Calu3 (cell line): ENCODE measurements at regions of chr20 and their contacts with region 1.

Region 1: DNA sequence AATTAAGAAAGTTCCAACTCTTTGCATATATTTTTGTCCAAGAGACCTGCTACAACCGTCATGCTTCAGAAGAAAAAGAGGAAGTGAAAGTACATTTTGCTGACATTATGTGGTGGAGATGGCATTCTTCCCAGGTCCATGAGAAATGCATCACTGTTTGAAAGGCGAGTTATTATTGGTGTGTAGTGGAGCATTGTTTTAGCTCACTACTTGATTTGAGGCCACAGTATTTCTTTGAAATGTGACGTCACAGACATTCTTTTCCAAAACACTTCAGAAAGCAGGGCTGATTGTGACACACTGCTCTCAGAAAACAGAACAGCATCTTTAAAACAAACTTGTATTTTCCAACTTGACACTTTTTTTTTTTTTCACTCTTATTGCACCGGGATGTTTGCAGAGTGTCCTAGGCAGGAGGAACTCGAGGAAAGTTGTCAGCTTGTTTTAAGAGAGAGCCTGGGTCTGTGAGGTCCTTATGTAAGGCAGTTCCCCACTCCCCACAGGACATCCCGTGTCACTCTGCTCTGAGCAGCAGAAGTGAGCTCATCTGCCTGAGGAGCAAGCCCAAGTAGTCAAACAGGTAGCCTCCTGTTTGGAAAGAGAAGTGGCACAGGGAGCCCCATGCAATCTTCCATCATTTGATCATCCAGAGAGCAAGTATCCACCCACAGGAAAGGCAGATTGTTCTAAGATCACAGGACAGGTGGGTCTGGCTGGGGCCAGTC is 1.1 kb downstream of the SPTLC3 start:
- DNase-seq: peak; percentile 8
- H3K4me3 Mint-ChIP-seq: peak overlapping the region; percentile 62
- H3K27ac Mint-ChIP-seq: peak overlapping the region; percentile 27
- H3K4me1 Mint-ChIP-seq: peaks cover 37% of the 10 kb centered on the region
- H3K27me3 Mint-ChIP-seq: no peaks in the 10 kb centered on the region
- CTCF ChIP-seq: no peak

Region 2: GRCh38 chr20:13046409-13046808 is 36.6 kb after region 1 on chr20:
- CTCF ChIA-PET with region 1: no interaction called
- intact Hi-C with region 1: loop called (anchors 5 kb)
- DNase-seq: no peak
- H3K4me3 Mint-ChIP-seq: no peak overlapping the region
- H3K27ac Mint-ChIP-seq: no peak overlapping the region
- H3K4me1 Mint-ChIP-seq: peaks cover 11% of the 10 kb centered on the region
- H3K27me3 Mint-ChIP-seq: no peaks in the 10 kb centered on the region
- CTCF ChIP-seq: no peak

Region 3: DNA sequence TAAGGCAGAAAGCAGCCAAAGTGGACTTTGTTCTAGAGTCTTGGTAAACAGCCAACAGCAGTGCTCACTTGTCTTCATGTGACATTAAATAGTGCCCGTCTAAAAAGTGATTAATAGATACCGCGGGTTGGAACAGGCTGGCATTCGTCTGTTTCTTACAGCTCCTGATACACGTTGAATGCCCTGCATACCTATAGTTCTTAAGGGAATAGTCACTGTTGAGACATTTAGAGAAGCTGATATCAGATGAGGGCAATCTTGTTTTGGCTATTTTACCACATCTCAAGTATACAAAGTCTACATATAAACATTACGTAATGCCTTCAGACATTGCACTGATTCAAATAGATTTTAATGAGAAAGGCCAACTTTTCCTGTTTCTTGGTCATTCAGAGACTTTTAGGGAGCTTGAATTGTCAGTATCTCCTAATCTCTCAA is 1702.5 kb after region 1 on chr20:
- CTCF ChIA-PET with region 1: no interaction called
- intact Hi-C with region 1: no loop called
- DNase-seq: peak; percentile 6
- H3K4me3 Mint-ChIP-seq: no peak overlapping the region
- H3K27ac Mint-ChIP-seq: peak overlapping the region; percentile 40
- H3K4me1 Mint-ChIP-seq: peaks cover 25% of the 10 kb centered on the region
- H3K27me3 Mint-ChIP-seq: no peaks in the 10 kb centered on the region
- CTCF ChIP-seq: no peak